Uterus (tissue), 4 donors: ENCODE measurements at regions of chr10 and their contacts with region 1.

Region 1: DNA sequence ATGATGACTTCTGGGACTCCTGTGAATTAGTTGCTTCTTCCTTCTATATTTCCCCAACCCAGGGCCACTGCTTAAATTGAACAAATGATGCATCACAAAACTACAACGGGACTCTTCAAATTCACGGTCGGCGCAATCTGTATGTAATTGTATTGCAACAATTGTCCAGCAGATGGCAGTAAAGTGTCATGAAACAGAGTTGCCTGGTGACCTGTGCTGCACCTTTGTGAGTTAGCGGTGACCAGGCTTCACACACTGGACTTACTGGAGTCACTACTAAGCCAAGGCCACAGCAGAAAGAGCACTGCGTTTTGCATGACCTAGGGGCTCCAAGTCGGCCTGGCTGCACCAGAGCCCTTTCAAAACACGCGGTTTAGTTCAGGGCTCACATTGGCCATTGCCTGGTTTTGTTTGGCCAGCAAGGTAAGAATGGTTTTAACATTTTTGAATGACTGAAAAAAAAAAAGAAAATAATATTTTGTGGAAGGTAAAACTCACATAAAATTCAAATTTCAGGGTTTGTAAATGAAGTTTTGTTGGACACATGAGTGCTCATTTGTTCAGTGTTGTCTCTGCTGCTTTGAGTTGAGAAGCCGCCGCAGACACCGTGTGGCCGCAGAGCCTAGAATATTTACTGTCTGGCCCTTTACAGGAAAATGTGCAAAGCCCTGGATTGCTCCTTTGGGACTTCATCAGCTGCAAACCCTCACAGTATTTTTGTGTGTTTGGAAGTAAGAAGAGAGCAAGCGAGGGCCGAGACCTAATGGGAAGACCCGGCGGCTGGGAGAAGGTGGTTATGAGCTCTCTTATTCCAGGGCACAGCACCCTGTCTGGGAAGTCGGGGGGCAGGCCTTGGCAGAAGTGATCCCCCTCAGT is 23.2 kb upstream of the ZNF32 start:
- DNase-seq: peak; percentile 47 to 65
- H3K4me3 ChIP-seq: no peak overlapping the region
- H3K27ac ChIP-seq: no peak overlapping the region
- H3K4me1 ChIP-seq: no peaks in the 10 kb centered on the region
- H3K27me3 ChIP-seq: no peaks in the 10 kb centered on the region
- CTCF ChIP-seq: peak; percentile 71 to 92 (median 81)
- POLR2A ChIP-seq: no peak

Region 2: DNA sequence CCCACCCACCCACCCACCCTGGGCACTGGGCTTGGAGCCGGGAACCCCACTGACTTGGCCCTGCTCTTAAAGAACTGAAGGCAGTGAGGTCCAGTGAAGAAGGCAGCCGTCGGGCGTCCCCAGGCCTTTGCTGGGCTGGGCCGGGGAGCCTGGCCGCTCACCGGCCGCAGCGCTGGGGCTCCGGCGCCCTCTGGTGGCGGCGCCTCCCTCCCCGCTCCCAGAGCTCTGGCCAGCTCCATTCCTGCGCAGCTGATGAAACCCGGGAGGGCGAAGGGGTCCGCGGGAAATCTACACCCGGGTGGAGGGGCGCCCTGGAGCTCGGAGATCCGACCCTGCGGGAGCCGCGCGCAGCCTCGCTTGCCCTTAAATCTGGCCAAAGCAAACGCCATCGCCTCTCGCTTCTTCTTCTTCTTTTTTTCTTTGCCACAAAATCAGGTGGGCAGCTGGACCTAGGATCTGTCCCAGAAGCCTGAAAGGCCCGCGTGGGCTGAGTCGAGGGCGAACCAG is 714.7 kb after region 1 on chr10:
- intact Hi-C with region 1: loop called (anchors 10 kb)
- DNase-seq: peak; percentile 68 to 78
- H3K4me3 ChIP-seq: peak overlapping the region in 1 of 2 donors; percentile 5
- H3K27ac ChIP-seq: peak overlapping the region; percentile 85 to 88
- H3K4me1 ChIP-seq: peaks cover 0 to 10% of the 10 kb centered on the region in 2 donors
- H3K27me3 ChIP-seq: no peaks in the 10 kb centered on the region
- CTCF ChIP-seq: peak; percentile 90 to 97 (median 94)
- POLR2A ChIP-seq: peak in 1 of 2 donors; percentile 21

Region 3: GRCh38 chr10:44857363-44858016 is 1185.6 kb after region 1 on chr10:
- intact Hi-C with region 1: loop called (anchors 5 kb)
- DNase-seq: peak; percentile 59 to 74
- H3K4me3 ChIP-seq: no peak overlapping the region
- H3K27ac ChIP-seq: no peak overlapping the region
- H3K4me1 ChIP-seq: no peaks in the 10 kb centered on the region
- H3K27me3 ChIP-seq: no peaks in the 10 kb centered on the region
- CTCF ChIP-seq: peak; percentile 87 to 98 (median 96)
- POLR2A ChIP-seq: no peak